T-cell (primary cell): ENCODE measurements at regions of chr1 and their contacts with region 1.

Region 1: DNA sequence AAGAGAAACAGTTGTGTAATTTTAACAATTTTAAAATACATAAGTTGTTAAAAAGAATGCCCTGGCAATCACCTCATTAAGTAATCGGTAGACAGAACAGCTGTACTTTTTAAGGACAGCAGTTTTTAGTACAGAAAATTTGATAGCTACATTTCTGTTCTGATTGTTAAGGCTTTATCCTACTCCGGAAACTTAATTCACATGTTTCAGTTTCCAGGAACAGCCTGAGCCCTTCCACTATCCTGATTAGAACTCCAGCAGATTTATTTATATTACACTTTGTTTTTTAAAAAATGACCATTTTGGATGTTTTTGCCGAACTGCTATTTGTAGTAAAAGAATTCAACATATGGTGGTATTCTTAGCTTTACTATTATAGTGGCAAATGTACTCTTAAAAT is 8.7 kb downstream of the PRRC2C start:
- DNase-seq: no peak
- ATAC-seq: no peak
- H3K4me3 ChIP-seq: no peak overlapping the region
- H3K4me3 Mint-ChIP-seq: peak overlapping the region; percentile 6 to 49 (median 40)
- H3K27ac ChIP-seq: no peak overlapping the region
- H3K27ac Mint-ChIP-seq: no peak overlapping the region
- H3K4me1 ChIP-seq: peaks cover 20 to 55% of the 10 kb centered on the region in 2 experiments
- H3K4me1 Mint-ChIP-seq: peaks cover 84 to 92% (median 91%) of the 10 kb centered on the region in 3 donors
- H3K27me3 ChIP-seq: no peaks in the 10 kb centered on the region
- H3K27me3 Mint-ChIP-seq: no peaks in the 10 kb centered on the region

Region 2: DNA sequence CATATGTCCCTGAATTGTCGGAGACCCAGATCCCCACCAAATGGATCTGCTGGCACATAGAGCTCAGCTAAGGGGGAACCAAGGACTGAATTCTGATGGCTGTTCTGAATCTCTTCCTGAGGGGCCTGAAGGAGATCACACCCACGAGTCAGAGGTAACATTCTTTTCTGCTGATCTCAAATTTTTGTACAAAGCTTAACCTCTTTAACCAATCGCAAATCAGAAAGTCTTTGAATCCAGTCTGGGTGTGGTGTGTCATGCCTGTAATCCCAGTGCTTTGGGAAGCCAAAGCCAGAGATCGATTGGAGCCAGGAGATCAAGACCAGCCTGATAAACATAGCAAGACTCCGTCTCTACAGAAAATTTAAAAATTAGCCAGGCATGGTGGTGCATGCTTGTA is 71.6 kb before region 1 on chr1:
- CTCF ChIA-PET with region 1: no interaction called
- POLR2A ChIA-PET with region 1: no interaction called
- DNase-seq: no peak
- ATAC-seq: no peak
- H3K4me3 ChIP-seq: no peak overlapping the region
- H3K4me3 Mint-ChIP-seq: no peak overlapping the region
- H3K27ac ChIP-seq: no peak overlapping the region
- H3K27ac Mint-ChIP-seq: peak overlapping the region; percentile 50 to 57
- H3K4me1 ChIP-seq: peaks cover 4 to 7% of the 10 kb centered on the region in 2 experiments
- H3K4me1 Mint-ChIP-seq: peaks cover 13 to 28% (median 25%) of the 10 kb centered on the region in 3 donors
- H3K27me3 ChIP-seq: no peaks in the 10 kb centered on the region
- H3K27me3 Mint-ChIP-seq: peaks cover 0 to 4% of the 10 kb centered on the region in 2 donors

Region 3: DNA sequence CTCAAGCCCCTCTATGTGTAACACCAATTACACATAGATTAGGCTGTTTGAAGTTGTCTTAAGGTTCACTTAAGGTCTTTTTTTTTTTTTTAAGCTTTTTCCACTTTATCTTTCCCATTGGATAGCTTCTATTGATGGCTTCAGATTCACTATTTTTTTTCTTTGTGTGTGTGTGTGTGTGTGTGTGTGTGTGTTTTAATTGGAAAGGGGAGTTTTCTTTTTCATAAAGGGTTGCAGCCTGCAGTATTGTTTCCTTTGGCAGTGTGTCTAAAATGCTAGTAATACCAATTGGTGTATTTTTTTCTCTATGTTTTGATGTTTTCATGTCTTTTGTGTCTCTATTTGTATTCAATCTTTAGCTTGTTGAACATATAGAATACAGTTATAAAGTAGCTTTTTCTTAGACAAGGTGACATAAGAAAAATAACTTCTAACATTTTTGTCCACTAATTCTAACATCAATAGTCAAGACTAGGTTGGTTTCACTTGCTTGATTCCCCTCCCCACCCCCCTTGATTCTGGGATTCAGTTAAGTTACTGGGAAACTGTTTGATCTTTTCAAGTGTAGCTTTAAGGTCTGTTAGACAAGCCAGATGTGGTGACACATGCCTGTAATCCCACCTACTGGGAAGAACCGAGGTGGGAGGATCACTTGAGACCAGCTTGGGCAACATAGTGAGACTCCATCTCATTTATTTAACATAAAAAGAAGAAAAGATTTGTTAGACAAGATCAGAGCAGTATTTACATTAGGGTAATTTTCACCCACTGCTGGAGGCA is 12.6 kb after region 1 on chr1:
- CTCF ChIA-PET with region 1: interaction called in 1 of 2 experiments, 7 read pairs
- POLR2A ChIA-PET with region 1: interaction called, 11 to 18 read pairs
- DNase-seq: no peak
- ATAC-seq: peak in 2 of 4 experiments; percentile 12 to 30
- H3K4me3 ChIP-seq: no peak overlapping the region
- H3K4me3 Mint-ChIP-seq: peak overlapping the region; percentile 51 to 72 (median 56)
- H3K27ac ChIP-seq: no peak overlapping the region
- H3K27ac Mint-ChIP-seq: peak overlapping the region; percentile 74 to 77
- H3K4me1 ChIP-seq: peaks cover 38 to 41% of the 10 kb centered on the region in 2 experiments
- H3K4me1 Mint-ChIP-seq: peaks cover 97% of the 10 kb centered on the region in 3 donors
- H3K27me3 ChIP-seq: no peaks in the 10 kb centered on the region
- H3K27me3 Mint-ChIP-seq: no peaks in the 10 kb centered on the region

Region 4: GRCh38 chr1:171550050-171550449 is 56.0 kb after region 1 on chr1:
- CTCF ChIA-PET with region 1: no interaction called
- POLR2A ChIA-PET with region 1: interaction called in 1 of 2 experiments, 13 read pairs
- DNase-seq: no peak
- ATAC-seq: no peak
- H3K4me3 ChIP-seq: no peak overlapping the region
- H3K4me3 Mint-ChIP-seq: no peak overlapping the region
- H3K27ac ChIP-seq: no peak overlapping the region
- H3K27ac Mint-ChIP-seq: no peak overlapping the region
- H3K4me1 ChIP-seq: no peaks in the 10 kb centered on the region
- H3K4me1 Mint-ChIP-seq: peaks cover 34 to 38% (median 37%) of the 10 kb centered on the region in 3 donors
- H3K27me3 ChIP-seq: no peaks in the 10 kb centered on the region
- H3K27me3 Mint-ChIP-seq: no peaks in the 10 kb centered on the region

Region 5: DNA sequence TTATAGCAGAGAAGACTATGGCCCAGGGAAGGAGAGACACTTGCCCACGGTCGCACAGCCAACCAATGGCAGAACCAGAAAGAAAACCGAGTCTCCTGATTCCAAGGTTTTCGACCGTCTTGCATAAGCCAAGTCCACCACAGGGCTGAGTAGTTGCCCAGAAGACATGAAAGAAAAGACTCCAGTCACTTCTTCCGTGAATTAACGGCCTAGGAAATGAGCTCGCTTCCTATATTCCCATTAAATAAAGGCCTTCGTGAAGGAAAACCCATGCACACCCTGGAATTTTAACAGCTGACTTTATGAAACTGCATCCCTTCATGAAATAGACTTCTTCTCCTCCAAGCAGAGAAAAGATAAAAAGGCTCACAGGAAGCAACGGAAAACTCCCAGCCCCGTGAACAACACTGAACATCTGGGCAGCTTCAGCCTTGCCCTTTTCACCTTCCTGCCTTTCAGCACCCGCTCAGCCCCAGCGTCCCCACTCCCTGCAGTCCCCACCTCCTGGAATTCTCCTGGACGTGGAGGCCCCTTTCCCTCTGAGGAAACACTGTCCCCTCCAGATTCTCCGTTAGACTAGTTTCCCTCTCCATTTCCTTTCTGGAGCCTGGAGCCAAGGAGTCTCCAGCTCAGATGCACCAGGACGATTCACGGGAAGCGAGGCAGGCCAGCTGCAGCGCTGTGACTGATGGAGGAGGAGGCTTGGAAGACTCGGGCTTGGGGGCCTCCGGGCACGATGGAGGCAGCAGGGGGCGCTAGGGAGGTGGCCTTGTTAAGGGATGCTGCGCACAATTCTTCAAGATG is 161.1 kb after region 1 on chr1:
- CTCF ChIA-PET with region 1: no interaction called
- POLR2A ChIA-PET with region 1: no interaction called
- DNase-seq: peak; percentile 3 to 68 (median 47)
- ATAC-seq: peak; percentile 37 to 71 (median 62)
- H3K4me3 ChIP-seq: no peak overlapping the region
- H3K4me3 Mint-ChIP-seq: peak overlapping the region in 2 of 3 donors; percentile 11 to 43
- H3K27ac ChIP-seq: no peak overlapping the region
- H3K27ac Mint-ChIP-seq: no peak overlapping the region
- H3K4me1 ChIP-seq: peaks cover 4 to 5% of the 10 kb centered on the region in 2 experiments
- H3K4me1 Mint-ChIP-seq: peaks cover 9 to 12% (median 11%) of the 10 kb centered on the region in 3 donors
- H3K27me3 ChIP-seq: peaks cover 0 to 23% of the 10 kb centered on the region in 2 experiments
- H3K27me3 Mint-ChIP-seq: peaks cover 15 to 16% of the 10 kb centered on the region in 2 donors